Natural killer cell (primary cell): ENCODE measurements at regions of chr7 and their contacts with region 1.

Region 1: GRCh38 chr7:30348083-30348560 is 63.7 kb downstream of the ZNRF2 start:
- DNase-seq: peak; percentile 30 to 89
- ATAC-seq: peak; percentile 82 to 90 (median 89)
- H3K4me3 ChIP-seq: no peak overlapping the region
- H3K4me3 Mint-ChIP-seq: peak overlapping the region; percentile 83
- H3K27ac ChIP-seq: peak overlapping the region; percentile 74
- H3K27ac Mint-ChIP-seq: peak overlapping the region; percentile 96 to 97
- H3K4me1 ChIP-seq: peaks cover 11% of the 10 kb centered on the region
- H3K4me1 Mint-ChIP-seq: peaks cover 50 to 64% of the 10 kb centered on the region in 2 donors
- H3K27me3 ChIP-seq: no peaks in the 10 kb centered on the region
- H3K27me3 Mint-ChIP-seq: no peaks in the 10 kb centered on the region
- CTCF ChIP-seq: no peak

Region 2: GRCh38 chr7:30225863-30226613 is 122.1 kb before region 1 on chr7:
- intact Hi-C with region 1: no loop called
- DNase-seq: peak in 1 of 2 donors; percentile 10
- ATAC-seq: peak; percentile 44 to 74 (median 46)
- H3K4me3 ChIP-seq: no peak overlapping the region
- H3K4me3 Mint-ChIP-seq: no peak overlapping the region
- H3K27ac ChIP-seq: peak overlapping the region; percentile 21
- H3K27ac Mint-ChIP-seq: no peak overlapping the region
- H3K4me1 ChIP-seq: peaks cover 8% of the 10 kb centered on the region
- H3K4me1 Mint-ChIP-seq: no peaks in the 10 kb centered on the region
- H3K27me3 ChIP-seq: no peaks in the 10 kb centered on the region
- H3K27me3 Mint-ChIP-seq: peaks cover 0 to 3% of the 10 kb centered on the region in 2 donors
- CTCF ChIP-seq: no peak

Region 3: GRCh38 chr7:30284298-30285066 is 63.6 kb before region 1 on chr7 and contains the start of gene ZNRF2:
- intact Hi-C with region 1: loop called (anchors 1 kb)
- DNase-seq: peak; percentile 96 to 100
- ATAC-seq: peak; percentile 81 to 94 (median 83)
- H3K4me3 ChIP-seq: peak within 1 kb of the TSS; percentile 65
- H3K4me3 Mint-ChIP-seq: peak within 1 kb of the TSS; percentile 84
- H3K27ac ChIP-seq: peak within 1 kb of the TSS; percentile 90
- H3K27ac Mint-ChIP-seq: peak within 1 kb of the TSS; percentile 89 to 98
- H3K4me1 ChIP-seq: peaks cover 8% of the 10 kb centered on the region
- H3K4me1 Mint-ChIP-seq: peaks cover 52 to 53% of the 10 kb centered on the region in 2 donors
- H3K27me3 ChIP-seq: no peaks in the 10 kb centered on the region
- H3K27me3 Mint-ChIP-seq: no peaks in the 10 kb centered on the region
- CTCF ChIP-seq: peak; percentile 25
- total RNA-seq, gene ZNRF2: 35.0 to 43.7 (median 36.3) TPM

Region 4: DNA sequence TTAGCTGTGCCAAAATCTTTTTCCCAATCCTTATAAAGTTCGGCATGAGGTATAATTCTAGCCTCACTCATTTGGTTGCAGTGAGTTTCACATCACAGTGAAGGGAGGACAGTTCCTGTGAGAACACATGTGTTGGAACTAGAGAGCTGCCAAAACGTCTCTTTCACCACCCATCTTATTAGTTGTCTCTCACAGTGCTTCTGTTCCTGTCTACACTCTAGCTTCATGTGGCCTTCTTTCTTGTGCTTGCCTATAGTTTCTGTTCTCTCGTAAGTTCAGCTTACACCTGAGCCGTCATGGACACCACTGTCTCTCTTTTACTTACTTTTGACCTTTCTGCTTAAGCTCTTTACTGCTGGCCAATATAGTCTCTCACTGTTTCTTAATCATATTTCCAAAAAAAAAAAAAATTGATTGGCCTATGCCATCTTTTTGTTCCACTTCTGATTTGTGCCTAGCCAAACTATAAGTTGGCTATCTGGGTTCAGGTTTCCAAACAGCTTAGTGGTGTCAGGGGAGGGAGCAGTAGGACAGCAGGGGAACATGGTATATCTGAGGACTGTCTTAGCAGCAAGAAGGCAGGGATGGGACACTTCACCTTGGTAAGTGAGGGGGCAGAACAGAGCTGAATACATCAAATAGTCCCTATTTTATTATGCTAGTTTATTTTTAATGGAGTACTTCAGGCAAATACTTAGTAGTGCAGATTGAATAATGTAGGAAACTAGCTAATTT is 25.7 kb before region 1 on chr7:
- intact Hi-C with region 1: loop called (anchors 2 kb)
- DNase-seq: peak in 1 of 2 donors; percentile 70
- ATAC-seq: peak; percentile 85 to 94 (median 91)
- H3K4me3 ChIP-seq: peak overlapping the region; percentile 30
- H3K4me3 Mint-ChIP-seq: peak overlapping the region; percentile 91
- H3K27ac ChIP-seq: peak overlapping the region; percentile 87
- H3K27ac Mint-ChIP-seq: peak overlapping the region; percentile 97 to 98
- H3K4me1 ChIP-seq: peaks cover 11% of the 10 kb centered on the region
- H3K4me1 Mint-ChIP-seq: peaks cover 57 to 63% of the 10 kb centered on the region in 2 donors
- H3K27me3 ChIP-seq: no peaks in the 10 kb centered on the region
- H3K27me3 Mint-ChIP-seq: no peaks in the 10 kb centered on the region
- CTCF ChIP-seq: no peak

Region 5: GRCh38 chr7:30330134-30331111 is 17.7 kb before region 1 on chr7:
- intact Hi-C with region 1: loop called (anchors 1 kb)
- DNase-seq: peak in 1 of 2 donors; percentile 77
- ATAC-seq: peak; percentile 84 to 92 (median 87)
- H3K4me3 ChIP-seq: no peak overlapping the region
- H3K4me3 Mint-ChIP-seq: peak overlapping the region; percentile 85
- H3K27ac ChIP-seq: peak overlapping the region; percentile 76
- H3K27ac Mint-ChIP-seq: peak overlapping the region; percentile 85 to 94
- H3K4me1 ChIP-seq: no peaks in the 10 kb centered on the region
- H3K4me1 Mint-ChIP-seq: peaks cover 58 to 60% of the 10 kb centered on the region in 2 donors
- H3K27me3 ChIP-seq: no peaks in the 10 kb centered on the region
- H3K27me3 Mint-ChIP-seq: no peaks in the 10 kb centered on the region
- CTCF ChIP-seq: no peak

Region 6: GRCh38 chr7:30379131-30379530 is 31.0 kb after region 1 on chr7:
- intact Hi-C with region 1: no loop called
- DNase-seq: no peak
- ATAC-seq: no peak
- H3K4me3 ChIP-seq: no peak overlapping the region
- H3K4me3 Mint-ChIP-seq: no peak overlapping the region
- H3K27ac ChIP-seq: no peak overlapping the region
- H3K27ac Mint-ChIP-seq: no peak overlapping the region
- H3K4me1 ChIP-seq: no peaks in the 10 kb centered on the region
- H3K4me1 Mint-ChIP-seq: peaks cover 4 to 12% of the 10 kb centered on the region in 2 donors
- H3K27me3 ChIP-seq: no peaks in the 10 kb centered on the region
- H3K27me3 Mint-ChIP-seq: no peaks in the 10 kb centered on the region
- CTCF ChIP-seq: no peak